ENCODE measurements at regions of chr12 and their contacts with region 1.

Region 1: GRCh38 chr12:8890313-8891085 is 23.8 kb upstream of the PHC1 start:
- DNase-seq: peak; percentile 37 to 53
- H3K4me3 ChIP-seq: peak overlapping the region in 2 of 3 donors; percentile 2 to 45
- H3K27ac ChIP-seq: no peak overlapping the region
- H3K4me1 ChIP-seq: no peaks in the 10 kb centered on the region
- H3K27me3 ChIP-seq: no peaks in the 10 kb centered on the region
- CTCF ChIP-seq: peak; percentile 69 to 91 (median 82)
- POLR2A ChIP-seq: no peak

Region 2: DNA sequence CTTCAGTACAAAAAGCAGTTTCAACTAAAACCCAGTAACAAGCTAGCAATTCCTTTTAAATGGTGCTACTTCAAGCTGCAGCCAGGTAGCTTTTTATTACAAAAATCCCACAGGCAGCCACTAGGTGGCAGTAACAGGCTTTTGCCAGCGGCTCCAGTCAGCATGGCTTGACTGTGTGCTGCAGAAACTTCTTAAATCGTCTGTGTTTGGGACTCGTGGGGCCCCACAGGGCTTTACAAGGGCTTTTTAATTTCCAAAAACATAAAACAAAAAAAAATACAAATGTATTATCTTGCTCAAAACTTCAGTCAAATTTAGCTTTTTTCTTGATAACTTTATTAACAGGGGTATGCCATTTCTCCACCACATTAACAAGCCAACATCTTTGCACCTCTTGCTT is 346.2 kb before region 1 on chr12:
- intact Hi-C with region 1: loop called (anchors 10 kb)
- DNase-seq: peak; percentile 55 to 65
- H3K4me3 ChIP-seq: no peak overlapping the region
- H3K27ac ChIP-seq: no peak overlapping the region
- H3K4me1 ChIP-seq: no peaks in the 10 kb centered on the region
- H3K27me3 ChIP-seq: no peaks in the 10 kb centered on the region
- CTCF ChIP-seq: peak; percentile 62 to 98 (median 84)
- POLR2A ChIP-seq: no peak